WTC11 (cell line): ENCODE measurements at regions of chr6 and their contacts with region 1.

Region 1: DNA sequence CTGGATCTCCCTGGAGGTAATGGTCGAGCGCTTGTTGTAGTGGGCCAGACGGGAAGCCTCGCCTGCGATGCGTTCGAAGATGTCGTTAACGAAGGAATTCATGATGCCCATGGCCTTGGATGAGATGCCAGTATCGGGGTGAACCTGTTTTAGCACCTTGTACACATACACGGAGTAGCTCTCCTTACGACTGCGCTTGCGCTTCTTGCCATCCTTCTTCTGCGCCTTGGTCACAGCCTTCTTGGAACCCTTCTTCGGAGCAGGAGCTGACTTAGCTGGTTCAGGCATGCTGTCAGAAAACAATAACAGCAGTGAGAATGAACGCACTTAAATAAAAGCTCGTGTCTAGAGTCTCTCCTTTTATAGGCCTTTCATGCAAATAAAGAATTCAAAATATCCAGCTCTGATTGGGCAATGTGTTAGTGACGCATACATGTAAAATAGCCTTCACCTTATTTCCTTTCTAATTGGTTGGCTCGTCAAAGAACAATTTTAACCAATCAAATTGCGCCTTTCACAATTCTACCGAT is 129.2 kb downstream of the HFE start:
- DNase-seq: no peak
- ATAC-seq: peak; percentile 53
- H3K4me3 Mint-ChIP-seq: no peak overlapping the region
- H3K27ac Mint-ChIP-seq: no peak overlapping the region
- H3K4me1 Mint-ChIP-seq: peaks cover 36% of the 10 kb centered on the region
- H3K27me3 Mint-ChIP-seq: no peaks in the 10 kb centered on the region
- CTCF ChIP-seq: no peak

Region 2: DNA sequence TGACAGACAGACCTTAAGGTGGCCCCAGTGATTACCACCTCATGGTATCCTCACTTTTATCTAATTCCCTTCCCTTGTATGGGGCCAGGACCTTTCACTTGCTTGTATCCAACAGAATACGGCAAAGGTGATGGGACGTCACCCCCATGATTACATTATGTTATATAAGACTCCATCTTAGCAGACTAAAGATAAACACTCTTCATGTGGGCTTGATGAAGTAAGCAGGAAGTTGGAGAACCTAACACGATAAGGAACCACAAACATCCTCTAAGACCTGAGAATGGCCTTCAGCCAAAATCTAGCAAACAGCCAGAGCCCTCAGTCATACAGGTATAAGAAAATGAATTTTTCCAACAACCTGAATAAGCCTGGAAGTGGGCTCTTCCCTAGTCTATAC is 350.4 kb before region 1 on chr6:
- CTCF ChIA-PET with region 1: no interaction called
- POLR2A ChIA-PET with region 1: no interaction called
- DNase-seq: no peak
- ATAC-seq: no peak
- H3K4me3 Mint-ChIP-seq: no peak overlapping the region
- H3K27ac Mint-ChIP-seq: no peak overlapping the region
- H3K4me1 Mint-ChIP-seq: no peaks in the 10 kb centered on the region
- H3K27me3 Mint-ChIP-seq: peaks cover 2% of the 10 kb centered on the region; the same call in 1 of the 2 replicates
- CTCF ChIP-seq: no peak

Region 3: GRCh38 chr6:26045065-26045927 is 171.1 kb before region 1 on chr6:
- CTCF ChIA-PET with region 1: no interaction called
- POLR2A ChIA-PET with region 1: interaction called, 24 read pairs
- DNase-seq: peak; percentile 43
- ATAC-seq: peak; percentile 22; the same call in 1 of the 2 replicates
- H3K4me3 Mint-ChIP-seq: peak overlapping the region; percentile 64
- H3K27ac Mint-ChIP-seq: peak overlapping the region; percentile 95
- H3K4me1 Mint-ChIP-seq: peaks cover 42% of the 10 kb centered on the region
- H3K27me3 Mint-ChIP-seq: no peaks in the 10 kb centered on the region
- CTCF ChIP-seq: no peak

Region 4: GRCh38 chr6:26156076-26156849 is 60.2 kb before region 1 on chr6:
- CTCF ChIA-PET with region 1: interaction called, 3 read pairs
- POLR2A ChIA-PET with region 1: interaction called, 122 read pairs
- DNase-seq: peak; percentile 81
- ATAC-seq: peak; percentile 47
- H3K4me3 Mint-ChIP-seq: peak overlapping the region; percentile 84
- H3K27ac Mint-ChIP-seq: peak overlapping the region; percentile 98
- H3K4me1 Mint-ChIP-seq: peaks cover 22% of the 10 kb centered on the region
- H3K27me3 Mint-ChIP-seq: peaks cover 3% of the 10 kb centered on the region; the same call in 1 of the 2 replicates
- CTCF ChIP-seq: no peak

Region 5: DNA sequence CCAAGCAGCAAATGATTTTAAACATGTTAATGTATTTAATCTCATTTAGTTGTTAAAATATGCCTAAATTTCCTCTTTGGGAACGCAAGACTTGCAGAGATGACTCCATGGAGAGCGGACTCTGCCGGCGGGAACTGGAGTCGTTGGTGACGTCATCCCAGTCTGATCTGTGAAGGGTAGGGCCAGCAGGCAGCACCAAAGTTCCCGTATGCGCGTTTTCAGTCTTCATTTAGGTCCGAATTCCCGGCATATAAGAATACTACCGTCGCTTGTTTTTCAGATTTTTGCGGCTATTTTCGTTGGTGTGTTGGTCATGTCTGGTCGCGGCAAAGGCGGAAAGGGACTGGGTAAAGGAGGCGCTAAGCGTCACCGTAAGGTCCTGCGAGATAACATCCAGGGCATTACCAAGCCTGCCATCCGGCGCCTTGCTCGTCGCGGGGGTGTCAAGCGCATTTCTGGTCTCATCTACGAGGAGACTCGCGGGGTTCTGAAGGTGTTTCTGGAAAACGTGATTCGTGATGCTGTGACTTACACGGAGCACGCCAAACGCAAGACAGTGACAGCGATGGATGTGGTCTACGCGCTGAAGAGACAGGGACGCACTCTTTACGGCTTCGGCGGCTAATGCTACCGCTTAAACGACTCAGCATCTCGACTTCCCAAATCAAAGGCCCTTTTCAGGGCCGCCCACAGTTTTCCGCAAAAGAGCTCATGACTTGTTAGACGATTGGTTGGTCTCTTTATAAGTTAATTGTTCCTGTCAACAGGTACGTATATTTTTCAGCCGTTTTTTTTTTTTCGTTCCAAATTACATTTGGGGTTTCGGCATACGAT is 11.9 kb before region 1 on chr6:
- CTCF ChIA-PET with region 1: interaction called, 4 read pairs
- POLR2A ChIA-PET with region 1: interaction called, 383 read pairs
- DNase-seq: peak; percentile 90
- ATAC-seq: peak; percentile 58
- H3K4me3 Mint-ChIP-seq: no peak overlapping the region
- H3K27ac Mint-ChIP-seq: no peak overlapping the region
- H3K4me1 Mint-ChIP-seq: peaks cover 22% of the 10 kb centered on the region
- H3K27me3 Mint-ChIP-seq: no peaks in the 10 kb centered on the region
- CTCF ChIP-seq: no peak

Region 6: GRCh38 chr6:26270903-26271667 is 54.7 kb after region 1 on chr6:
- CTCF ChIA-PET with region 1: interaction called, 3 read pairs
- POLR2A ChIA-PET with region 1: interaction called, 190 read pairs
- DNase-seq: peak; percentile 65
- ATAC-seq: peak; percentile 28
- H3K4me3 Mint-ChIP-seq: no peak overlapping the region
- H3K27ac Mint-ChIP-seq: no peak overlapping the region
- H3K4me1 Mint-ChIP-seq: peaks cover 35% of the 10 kb centered on the region
- H3K27me3 Mint-ChIP-seq: no peaks in the 10 kb centered on the region
- CTCF ChIP-seq: no peak

Region 7: GRCh38 chr6:26329763-26330511 is 113.5 kb after region 1 on chr6:
- CTCF ChIA-PET with region 1: no interaction called
- POLR2A ChIA-PET with region 1: no interaction called
- DNase-seq: peak; percentile 75
- ATAC-seq: 0 out of 2 replicates have a peak, but pooled peaks have one; percentile 13
- H3K4me3 Mint-ChIP-seq: peak overlapping the region; percentile 94
- H3K27ac Mint-ChIP-seq: no peak overlapping the region
- H3K4me1 Mint-ChIP-seq: peaks cover 9% of the 10 kb centered on the region
- H3K27me3 Mint-ChIP-seq: peaks cover 24% of the 10 kb centered on the region
- CTCF ChIP-seq: no peak

Region 8: GRCh38 chr6:27146706-27147505 is 930.5 kb after region 1 on chr6:
- CTCF ChIA-PET with region 1: no interaction called
- POLR2A ChIA-PET with region 1: interaction called, 28 read pairs
- DNase-seq: peak; percentile 80
- ATAC-seq: peak; percentile 67
- H3K4me3 Mint-ChIP-seq: no peak overlapping the region
- H3K27ac Mint-ChIP-seq: no peak overlapping the region
- H3K4me1 Mint-ChIP-seq: peaks cover 23% of the 10 kb centered on the region
- H3K27me3 Mint-ChIP-seq: no peaks in the 10 kb centered on the region
- CTCF ChIP-seq: no peak

Region 9: DNA sequence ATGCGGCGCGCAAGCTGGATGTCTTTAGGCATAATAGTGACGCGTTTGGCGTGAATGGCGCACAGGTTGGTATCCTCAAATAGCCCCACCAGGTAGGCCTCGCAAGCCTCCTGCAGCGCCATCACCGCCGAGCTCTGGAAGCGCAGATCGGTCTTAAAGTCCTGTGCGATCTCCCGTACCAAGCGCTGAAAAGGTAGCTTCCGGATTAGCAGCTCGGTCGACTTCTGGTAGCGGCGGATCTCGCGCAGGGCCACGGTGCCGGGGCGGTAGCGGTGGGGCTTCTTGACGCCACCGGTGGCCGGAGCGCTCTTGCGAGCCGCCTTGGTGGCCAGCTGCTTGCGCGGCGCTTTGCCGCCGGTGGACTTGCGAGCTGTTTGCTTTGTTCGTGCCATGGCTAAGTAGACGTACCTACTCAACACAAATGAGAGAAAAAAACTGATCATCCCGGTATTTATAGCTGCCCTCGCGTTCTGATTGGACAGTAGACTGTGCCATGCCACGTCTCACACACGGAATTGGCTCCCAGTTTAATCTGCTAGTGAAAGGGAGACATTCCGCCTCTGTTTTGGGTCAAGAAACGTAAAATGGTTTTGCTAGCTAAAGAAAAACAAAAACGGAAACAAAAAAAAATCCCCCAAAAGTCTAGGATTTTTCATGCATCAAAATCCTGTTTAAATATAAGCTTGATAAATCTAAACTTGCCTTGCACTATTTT is 1655.7 kb after region 1 on chr6:
- CTCF ChIA-PET with region 1: no interaction called
- POLR2A ChIA-PET with region 1: interaction called, 49 read pairs
- DNase-seq: peak; percentile 79
- ATAC-seq: peak; percentile 58
- H3K4me3 Mint-ChIP-seq: peak overlapping the region; percentile 94
- H3K27ac Mint-ChIP-seq: peak overlapping the region; percentile 99
- H3K4me1 Mint-ChIP-seq: peaks cover 50% of the 10 kb centered on the region
- H3K27me3 Mint-ChIP-seq: no peaks in the 10 kb centered on the region
- CTCF ChIP-seq: no peak